Endothelial cell of umbilical vein (primary cell): ENCODE measurements at regions of chr10 and their contacts with region 1.

Region 1: DNA sequence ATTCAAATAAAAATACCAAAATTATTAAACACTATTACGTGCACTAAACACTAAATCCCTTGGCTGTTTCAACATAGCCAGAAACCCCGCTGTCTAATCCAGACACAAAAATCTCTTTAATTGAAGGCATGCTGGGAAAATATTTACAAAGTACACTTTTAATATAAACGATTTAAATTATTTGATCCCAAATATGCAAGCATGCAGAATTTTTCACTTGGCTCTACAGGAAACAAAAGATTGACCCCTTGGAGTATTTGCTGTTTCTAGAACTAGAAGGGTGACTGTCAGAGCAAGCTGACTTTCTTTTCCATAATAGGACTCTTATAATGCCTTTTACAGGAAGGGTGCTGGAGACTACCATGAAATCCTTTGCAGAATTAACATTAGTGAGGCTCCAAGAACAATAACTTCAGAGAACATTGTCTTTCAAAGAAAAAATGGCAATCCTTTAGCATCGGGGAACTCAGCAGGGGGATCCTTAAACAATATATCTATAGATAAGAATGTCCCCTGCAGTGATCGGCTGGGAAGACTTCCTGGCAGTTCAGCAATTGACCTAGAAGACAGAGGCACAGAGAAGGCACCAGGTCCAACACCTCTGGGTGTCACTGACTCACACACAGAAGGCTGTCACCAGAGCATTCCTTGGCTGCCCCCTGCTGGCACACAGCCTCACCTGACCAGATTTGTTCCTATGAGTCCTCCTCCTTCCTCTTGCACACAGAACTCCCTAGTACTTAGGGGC is 55.8 kb upstream of the MRLN start:
- DNase-seq: peak; percentile 71
- H3K4me3 ChIP-seq: no peak overlapping the region
- H3K27ac ChIP-seq: no peak overlapping the region
- H3K4me1 ChIP-seq: no peaks in the 10 kb centered on the region
- H3K27me3 ChIP-seq: no peaks in the 10 kb centered on the region
- CTCF ChIP-seq: peak; percentile 70 to 82
- POLR2A ChIP-seq: no peak

Region 2: GRCh38 chr10:59823111-59823510 is 14.0 kb after region 1 on chr10:
- CTCF ChIA-PET with region 1: interaction called, 10 read pairs
- POLR2A ChIA-PET with region 1: no interaction called
- dilution Hi-C with region 1: no loop called
- intact Hi-C with region 1: no loop called
- DNase-seq: no peak
- H3K4me3 ChIP-seq: no peak overlapping the region
- H3K27ac ChIP-seq: no peak overlapping the region
- H3K4me1 ChIP-seq: peaks cover 5% of the 10 kb centered on the region
- H3K27me3 ChIP-seq: no peaks in the 10 kb centered on the region
- CTCF ChIP-seq: no peak
- POLR2A ChIP-seq: no peak

Region 3: DNA sequence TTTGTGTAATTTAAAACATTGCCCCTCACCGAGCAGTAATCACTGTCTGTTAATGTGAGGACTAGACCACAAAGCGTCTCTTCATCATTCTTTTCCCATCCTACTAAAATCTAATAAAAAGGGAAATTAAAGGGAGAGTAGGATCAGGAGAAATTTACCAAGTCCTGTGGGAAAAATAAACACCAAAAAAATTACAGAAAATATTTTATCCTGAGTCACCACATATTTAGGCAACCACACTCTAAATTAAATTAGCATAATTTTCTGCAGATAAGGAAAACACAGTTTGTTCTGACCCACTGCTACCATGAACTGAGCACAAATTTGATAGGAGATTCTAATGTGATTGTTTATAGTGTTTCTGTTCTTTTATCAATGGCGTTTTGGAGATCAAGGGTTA is 48.0 kb after region 1 on chr10:
- CTCF ChIA-PET with region 1: no interaction called
- POLR2A ChIA-PET with region 1: no interaction called
- dilution Hi-C with region 1: no loop called
- intact Hi-C with region 1: no loop called
- DNase-seq: no peak
- H3K4me3 ChIP-seq: no peak overlapping the region
- H3K27ac ChIP-seq: no peak overlapping the region
- H3K4me1 ChIP-seq: peaks cover 6% of the 10 kb centered on the region
- H3K27me3 ChIP-seq: no peaks in the 10 kb centered on the region
- CTCF ChIP-seq: no peak
- POLR2A ChIP-seq: no peak

Region 4: GRCh38 chr10:60032723-60033122 is 223.7 kb after region 1 on chr10:
- CTCF ChIA-PET with region 1: interaction called, 3 read pairs
- POLR2A ChIA-PET with region 1: no interaction called
- dilution Hi-C with region 1: no loop called
- intact Hi-C with region 1: loop called (anchors 5 kb)
- DNase-seq: peak; percentile 56
- H3K4me3 ChIP-seq: no peak overlapping the region
- H3K27ac ChIP-seq: no peak overlapping the region
- H3K4me1 ChIP-seq: no peaks in the 10 kb centered on the region
- H3K27me3 ChIP-seq: no peaks in the 10 kb centered on the region
- CTCF ChIP-seq: peak; percentile 40 to 42
- POLR2A ChIP-seq: no peak